Activated CD4-positive, alpha-beta T cell treated with anti-CD3 and anti-CD28 coated beads for 36 hours (primary cell): ENCODE measurements at regions of chr16 and their contacts with region 1.

Region 1: DNA sequence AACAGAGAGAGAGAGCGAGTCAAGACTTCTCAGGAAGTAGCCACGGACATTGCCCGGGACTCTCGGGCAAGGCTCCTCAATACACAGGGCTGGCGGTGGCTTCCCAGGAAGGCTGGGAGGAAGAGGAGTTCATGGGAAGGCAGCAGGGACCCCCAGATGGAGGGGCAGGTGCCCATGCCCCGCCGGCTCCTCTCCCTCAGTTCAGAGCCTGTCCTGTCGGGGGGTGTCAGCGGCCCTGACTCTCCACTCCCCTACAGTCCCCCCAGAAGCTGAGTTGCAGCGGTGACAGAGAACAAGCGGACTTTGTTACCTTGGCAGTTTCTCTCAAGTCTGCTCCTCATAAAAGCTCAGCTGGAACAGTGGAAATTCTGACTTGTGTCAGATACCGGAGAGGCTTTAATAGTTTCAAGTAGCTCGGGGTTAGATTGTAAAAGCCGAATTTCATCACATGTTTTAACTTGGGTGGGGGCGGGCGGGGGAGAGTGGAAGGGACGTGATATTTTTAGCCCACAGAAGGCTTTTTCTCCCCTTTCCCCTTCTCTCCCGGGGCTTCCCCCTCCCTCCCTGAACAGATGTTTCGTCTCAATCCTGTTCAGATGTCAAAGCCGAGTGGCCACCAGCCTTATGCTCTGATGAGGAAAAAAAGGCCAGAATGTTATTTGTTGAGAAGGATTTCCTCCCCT is 65.2 kb downstream of the NKD1 start:
- DNase-seq: no peak
- ATAC-seq: no peak
- H3K4me3 Mint-ChIP-seq: no peak overlapping the region
- H3K27ac Mint-ChIP-seq: no peak overlapping the region
- H3K4me1 Mint-ChIP-seq: peaks cover 23% of the 10 kb centered on the region
- H3K27me3 Mint-ChIP-seq: no peaks in the 10 kb centered on the region

Region 2: DNA sequence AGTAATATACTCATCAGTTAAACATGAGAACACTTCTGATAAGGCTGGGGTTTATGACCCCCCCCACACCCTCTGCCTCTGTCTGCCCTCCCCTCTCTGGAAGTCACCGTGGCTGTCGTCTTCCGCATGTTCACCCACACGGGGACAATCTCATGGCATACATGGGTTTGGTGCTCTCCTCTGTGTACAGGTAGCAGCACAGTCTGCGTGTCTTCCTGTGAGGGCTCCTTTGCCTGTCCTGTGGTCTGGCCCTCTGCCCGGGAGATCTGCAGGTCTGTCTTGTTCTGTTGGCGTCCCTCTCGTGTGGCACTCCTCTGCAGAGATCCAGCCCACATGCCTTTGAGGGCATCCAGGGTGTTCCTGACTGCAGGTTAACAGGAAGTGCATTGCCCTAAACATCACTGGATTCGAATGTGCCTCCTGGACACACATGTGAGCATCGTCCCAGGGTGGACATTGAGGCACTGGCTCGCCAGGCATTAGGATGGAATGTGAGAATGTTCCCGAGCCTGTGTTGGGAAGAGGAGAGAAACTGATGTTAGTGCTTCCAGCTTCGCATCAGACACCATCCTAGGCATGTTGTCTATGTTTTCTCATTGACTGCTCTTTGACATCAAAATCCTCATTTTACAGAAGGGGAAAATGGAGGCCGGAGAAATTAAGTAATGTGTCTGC is 10.8 kb before region 1 on chr16:
- CTCF ChIA-PET with region 1: interaction called, 3 read pairs
- POLR2A ChIA-PET with region 1: no interaction called
- intact Hi-C with region 1: loop called in 1 of 2 experiments (anchors 1 kb)
- DNase-seq: peak; percentile 43
- ATAC-seq: peak; percentile 57
- H3K4me3 Mint-ChIP-seq: peak overlapping the region; percentile 35
- H3K27ac Mint-ChIP-seq: peak overlapping the region; percentile 69
- H3K4me1 Mint-ChIP-seq: peaks cover 44% of the 10 kb centered on the region
- H3K27me3 Mint-ChIP-seq: no peaks in the 10 kb centered on the region